Natural killer cell (primary cell): ENCODE measurements at regions of chr11 and their contacts with region 1.

Region 1: DNA sequence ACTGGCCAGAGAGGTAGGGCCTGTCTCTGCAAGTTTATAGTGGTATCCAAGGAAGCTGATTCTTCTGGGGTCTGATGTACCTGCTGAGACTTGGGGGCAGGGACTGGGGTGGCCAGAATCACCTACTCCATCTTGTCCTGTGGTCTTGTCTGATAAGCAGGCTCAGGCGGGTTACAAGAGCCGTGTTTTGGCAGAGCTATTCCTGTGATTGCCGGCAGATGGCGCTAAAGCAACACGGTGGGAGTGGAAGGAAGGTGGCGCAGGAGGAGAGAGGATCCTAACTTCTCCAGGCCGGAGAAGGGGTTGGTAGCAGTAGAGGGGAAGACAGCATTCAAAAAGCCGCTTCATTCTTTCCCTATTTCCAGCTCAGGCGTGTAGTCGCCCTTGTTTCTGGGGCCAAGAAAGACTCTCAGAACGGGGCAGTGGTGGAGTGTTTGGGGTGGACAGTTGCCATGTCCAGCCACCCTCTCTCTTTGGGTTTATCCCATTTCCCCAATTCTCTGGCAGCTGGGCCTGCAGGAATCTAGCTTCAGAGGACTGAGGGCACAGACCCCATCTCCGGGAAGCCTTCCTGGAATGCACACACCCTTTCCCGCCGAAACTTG is 15.1 kb downstream of the CHRM1 start:
- DNase-seq: peak; percentile 74 to 88
- ATAC-seq: peak; percentile 69 to 97 (median 87)
- H3K4me3 ChIP-seq: no peak overlapping the region
- H3K4me3 Mint-ChIP-seq: no peak overlapping the region
- H3K27ac ChIP-seq: no peak overlapping the region
- H3K27ac Mint-ChIP-seq: no peak overlapping the region
- H3K4me1 ChIP-seq: no peaks in the 10 kb centered on the region
- H3K4me1 Mint-ChIP-seq: peaks cover 6 to 9% of the 10 kb centered on the region in 2 donors
- H3K27me3 ChIP-seq: no peaks in the 10 kb centered on the region
- H3K27me3 Mint-ChIP-seq: peaks cover 7 to 22% of the 10 kb centered on the region in 2 donors
- CTCF ChIP-seq: peak; percentile 89

Region 2: GRCh38 chr11:62880803-62881578 is 25.0 kb before region 1 on chr11 and contains the start of gene SLC3A2:
- intact Hi-C with region 1: no loop called
- DNase-seq: peak; percentile 88 to 94
- ATAC-seq: peak; percentile 72 to 89 (median 80)
- H3K4me3 ChIP-seq: peak within 1 kb of the TSS; percentile 100
- H3K4me3 Mint-ChIP-seq: peak within 1 kb of the TSS; percentile 100
- H3K27ac ChIP-seq: peak within 1 kb of the TSS; percentile 90
- H3K27ac Mint-ChIP-seq: peak within 1 kb of the TSS; percentile 99
- H3K4me1 ChIP-seq: peaks cover 36% of the 10 kb centered on the region
- H3K4me1 Mint-ChIP-seq: peaks cover 41 to 56% of the 10 kb centered on the region in 2 donors
- H3K27me3 ChIP-seq: no peaks in the 10 kb centered on the region
- H3K27me3 Mint-ChIP-seq: no peaks in the 10 kb centered on the region
- CTCF ChIP-seq: peak; percentile 82
- total RNA-seq, gene SLC3A2: 200 to 235 (median 207) TPM

Region 3: DNA sequence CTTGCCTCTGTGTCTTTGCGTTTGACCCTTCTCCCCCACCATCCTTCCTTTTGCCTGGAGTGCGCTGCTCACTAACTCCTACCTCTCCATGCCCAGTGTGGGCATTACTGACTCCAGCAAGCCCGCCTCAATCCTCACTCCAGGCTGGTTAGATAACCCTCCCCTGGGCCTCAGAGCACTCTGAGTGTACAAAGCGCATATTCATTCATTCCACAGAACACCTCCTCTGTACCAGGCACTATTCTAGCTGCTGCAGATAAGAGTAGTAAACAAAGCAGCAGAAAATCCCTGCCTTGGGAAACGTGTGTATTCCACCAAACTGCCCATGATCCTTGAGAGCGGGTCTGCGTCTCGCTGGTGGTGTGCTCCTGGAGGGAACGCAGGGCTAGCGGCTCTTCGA is 106.4 kb after region 1 on chr11:
- intact Hi-C with region 1: no loop called
- DNase-seq: no peak
- ATAC-seq: no peak
- H3K4me3 ChIP-seq: no peak overlapping the region
- H3K4me3 Mint-ChIP-seq: no peak overlapping the region
- H3K27ac ChIP-seq: no peak overlapping the region
- H3K27ac Mint-ChIP-seq: no peak overlapping the region
- H3K4me1 ChIP-seq: no peaks in the 10 kb centered on the region
- H3K4me1 Mint-ChIP-seq: no peaks in the 10 kb centered on the region
- H3K27me3 ChIP-seq: no peaks in the 10 kb centered on the region
- H3K27me3 Mint-ChIP-seq: peaks cover 16 to 18% of the 10 kb centered on the region in 2 donors
- CTCF ChIP-seq: no peak

Region 4: DNA sequence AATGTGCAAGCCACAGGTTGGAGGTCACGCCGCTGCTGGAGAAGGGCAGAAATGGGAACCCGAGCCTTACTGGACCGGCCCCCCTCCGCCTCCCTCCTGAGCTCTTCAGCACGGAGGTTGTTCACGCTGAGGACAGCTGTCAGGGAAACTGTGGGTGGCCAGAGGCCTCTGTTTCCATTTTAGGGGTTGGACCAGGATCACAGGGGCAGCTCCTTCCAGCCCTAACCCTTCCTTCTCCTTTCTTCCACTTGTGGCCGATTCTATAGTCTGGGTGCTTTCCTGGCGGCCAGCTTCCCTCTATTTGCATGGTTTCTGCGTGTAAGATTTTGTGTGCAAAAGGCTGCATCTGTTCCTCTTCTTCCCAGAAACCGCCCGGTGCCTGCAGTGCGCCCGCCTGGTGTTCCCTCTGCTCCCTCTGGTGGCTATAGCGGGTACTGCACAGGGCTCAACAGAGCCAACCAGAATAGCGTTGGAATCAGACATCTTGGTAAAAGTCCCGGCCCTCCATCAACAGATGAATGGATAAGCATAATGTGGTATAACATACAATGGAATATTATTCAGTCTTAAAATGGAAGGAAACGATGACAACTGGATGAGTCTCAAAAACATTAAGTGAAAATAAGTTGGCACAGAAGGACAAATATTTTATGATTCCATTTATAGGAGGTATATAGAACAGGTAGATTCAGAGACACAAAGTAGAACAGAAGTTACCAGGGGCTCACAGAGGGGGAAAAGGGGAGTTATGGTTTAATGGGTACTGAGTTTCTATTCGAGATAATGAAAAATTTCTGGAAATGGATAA is 118.0 kb after region 1 on chr11:
- intact Hi-C with region 1: loop called (anchors 1 kb)
- DNase-seq: peak; percentile 76 to 87
- ATAC-seq: peak; percentile 87 to 98 (median 95)
- H3K4me3 ChIP-seq: no peak overlapping the region
- H3K4me3 Mint-ChIP-seq: no peak overlapping the region
- H3K27ac ChIP-seq: no peak overlapping the region
- H3K27ac Mint-ChIP-seq: no peak overlapping the region
- H3K4me1 ChIP-seq: peaks cover 3% of the 10 kb centered on the region
- H3K4me1 Mint-ChIP-seq: peaks cover 7% of the 10 kb centered on the region in 2 donors
- H3K27me3 ChIP-seq: peaks cover 2% of the 10 kb centered on the region
- H3K27me3 Mint-ChIP-seq: peaks cover 4 to 15% of the 10 kb centered on the region in 2 donors
- CTCF ChIP-seq: peak; percentile 99

Region 5: DNA sequence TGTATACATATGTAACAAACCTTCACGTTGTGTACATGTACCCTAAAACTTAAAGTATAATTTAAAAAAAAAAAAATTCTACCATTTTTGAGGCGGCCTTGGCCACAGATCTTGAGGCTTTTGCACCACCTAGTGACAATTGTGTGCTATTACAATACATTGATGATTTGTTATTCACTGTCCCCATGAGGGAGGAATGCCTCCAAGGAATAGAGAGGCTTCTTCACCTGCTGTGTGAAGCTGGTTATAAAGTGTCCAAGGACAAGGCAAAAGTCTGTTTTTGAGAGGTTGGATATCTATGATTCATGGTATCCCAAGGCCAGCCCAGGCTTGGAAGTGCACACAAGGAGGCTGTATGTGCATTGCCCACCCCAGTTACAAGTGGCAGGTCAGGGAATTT is 306.7 kb after region 1 on chr11:
- intact Hi-C with region 1: loop called (anchors 5 kb)
- DNase-seq: peak in 1 of 2 donors; percentile 49
- ATAC-seq: no peak
- H3K4me3 ChIP-seq: no peak overlapping the region
- H3K4me3 Mint-ChIP-seq: no peak overlapping the region
- H3K27ac ChIP-seq: no peak overlapping the region
- H3K27ac Mint-ChIP-seq: no peak overlapping the region
- H3K4me1 ChIP-seq: no peaks in the 10 kb centered on the region
- H3K4me1 Mint-ChIP-seq: no peaks in the 10 kb centered on the region
- H3K27me3 ChIP-seq: peaks cover 3% of the 10 kb centered on the region
- H3K27me3 Mint-ChIP-seq: peaks cover 10 to 31% of the 10 kb centered on the region in 2 donors
- CTCF ChIP-seq: peak; percentile 42